ENCODE measurements at regions of chr6 and their contacts with region 1.

Region 1: GRCh38 chr6:35202066-35202546 is 11.7 kb upstream of the SCUBE3 start:
- DNase-seq: no peak
- ATAC-seq: peak; percentile 65
- H3K4me3 Mint-ChIP-seq: no peak overlapping the region
- H3K27ac Mint-ChIP-seq: no peak overlapping the region
- H3K4me1 Mint-ChIP-seq: peaks cover 4% of the 10 kb centered on the region
- H3K27me3 Mint-ChIP-seq: peaks cover 39% of the 10 kb centered on the region
- CTCF ChIP-seq: no peak

Region 2: GRCh38 chr6:35146453-35146852 is 55.7 kb before region 1 on chr6:
- CTCF ChIA-PET with region 1: interaction called, 56 read pairs
- POLR2A ChIA-PET with region 1: no interaction called
- DNase-seq: peak; percentile 56
- ATAC-seq: peak; percentile 15; the same call in 1 of the 2 replicates
- H3K4me3 Mint-ChIP-seq: no peak overlapping the region
- H3K27ac Mint-ChIP-seq: no peak overlapping the region
- H3K4me1 Mint-ChIP-seq: peaks cover 30% of the 10 kb centered on the region
- H3K27me3 Mint-ChIP-seq: peaks cover 60% of the 10 kb centered on the region
- CTCF ChIP-seq: no peak

Region 3: DNA sequence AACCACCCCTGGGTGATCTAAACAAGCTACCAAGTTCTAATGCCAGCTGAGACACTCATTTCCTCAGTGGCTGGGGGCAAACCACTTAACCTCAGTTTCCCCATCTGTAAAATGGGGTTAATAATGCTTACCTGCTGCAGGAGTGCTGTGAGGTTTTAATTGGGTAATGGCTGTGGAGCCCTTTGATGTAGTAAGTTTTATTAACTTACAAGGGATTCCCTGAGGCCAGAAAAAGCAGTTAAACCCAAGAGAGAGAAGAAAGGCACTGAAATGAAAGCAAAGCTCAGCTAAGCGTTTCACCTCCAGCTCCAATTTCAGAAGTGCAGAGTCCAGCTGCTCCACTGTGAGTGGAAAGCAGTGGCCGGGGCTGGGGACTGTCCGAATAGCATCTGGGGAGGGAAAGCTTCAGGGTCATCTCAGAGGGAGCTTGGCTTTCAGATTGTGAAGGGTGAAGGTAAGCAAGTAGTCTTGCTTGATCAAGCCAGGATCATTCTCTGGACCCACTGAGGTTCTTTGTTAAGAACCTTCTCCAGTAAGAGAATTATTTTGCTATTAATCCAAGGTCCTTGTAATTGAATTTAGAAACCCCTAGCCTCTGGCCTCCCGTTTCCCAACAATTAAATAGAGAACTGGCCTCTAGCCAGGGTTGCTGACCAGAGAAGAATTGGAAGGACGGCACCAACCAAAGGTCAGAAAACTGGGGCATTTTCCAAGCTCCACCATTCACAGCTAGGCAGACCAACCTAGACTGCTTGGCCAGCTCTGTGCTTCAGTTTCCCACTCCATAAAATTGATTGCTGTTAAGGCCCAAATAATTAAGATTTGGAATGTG is 40.1 kb before region 1 on chr6:
- CTCF ChIA-PET with region 1: interaction called, 14 read pairs
- POLR2A ChIA-PET with region 1: no interaction called
- DNase-seq: no peak
- ATAC-seq: no peak
- H3K4me3 Mint-ChIP-seq: no peak overlapping the region
- H3K27ac Mint-ChIP-seq: no peak overlapping the region
- H3K4me1 Mint-ChIP-seq: peaks cover 18% of the 10 kb centered on the region
- H3K27me3 Mint-ChIP-seq: peaks cover 17% of the 10 kb centered on the region
- CTCF ChIP-seq: no peak

Region 4: DNA sequence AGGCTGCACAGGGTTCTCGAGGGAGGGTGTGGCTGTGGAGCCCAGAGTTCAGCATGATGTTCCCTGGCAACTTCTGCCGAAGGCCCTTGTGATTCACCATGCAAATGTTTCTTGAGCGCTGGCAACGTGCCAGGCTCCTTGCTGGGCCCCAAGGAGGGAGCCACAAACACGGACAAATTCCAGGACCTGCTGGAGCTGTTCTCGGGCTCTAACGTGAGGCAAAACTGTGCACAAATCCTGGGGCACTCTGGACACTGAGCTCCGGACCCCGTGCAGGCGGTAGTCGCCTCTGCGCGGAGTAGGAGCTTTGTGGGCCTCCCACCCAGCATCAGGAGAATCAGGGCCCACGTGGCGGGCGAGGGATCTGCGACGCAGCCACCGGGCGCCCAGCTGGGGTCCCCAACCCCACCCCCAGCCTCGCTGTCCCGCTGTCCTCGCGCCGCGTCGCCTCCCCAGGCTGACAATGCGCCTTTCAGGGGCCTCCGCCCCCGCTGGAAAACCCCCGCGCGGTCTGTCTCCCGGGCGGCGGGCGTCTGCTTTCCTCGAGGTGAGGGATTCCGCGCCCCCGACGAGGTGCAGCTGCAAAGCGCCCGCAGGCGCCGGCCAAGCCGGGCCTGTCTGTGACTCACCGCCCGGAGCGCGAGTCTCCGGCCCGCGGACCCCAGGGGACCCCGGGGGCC is 20.0 kb before region 1 on chr6:
- CTCF ChIA-PET with region 1: interaction called, 21 read pairs
- POLR2A ChIA-PET with region 1: no interaction called
- DNase-seq: peak; percentile 49
- ATAC-seq: peak; percentile 41
- H3K4me3 Mint-ChIP-seq: no peak overlapping the region
- H3K27ac Mint-ChIP-seq: no peak overlapping the region
- H3K4me1 Mint-ChIP-seq: peaks cover 7% of the 10 kb centered on the region; the same call in 1 of the 2 replicates
- H3K27me3 Mint-ChIP-seq: peaks cover 11% of the 10 kb centered on the region
- CTCF ChIP-seq: no peak

Region 5: GRCh38 chr6:35213824-35214756 is 12.0 kb after region 1 on chr6 and contains the start of gene SCUBE3:
- CTCF ChIA-PET with region 1: interaction called, 32 read pairs
- POLR2A ChIA-PET with region 1: no interaction called
- DNase-seq: peak; percentile 70
- ATAC-seq: peak; percentile 74
- H3K4me3 Mint-ChIP-seq: peak within 1 kb of the TSS; percentile 80
- H3K27ac Mint-ChIP-seq: no peak within 1 kb of the TSS
- H3K4me1 Mint-ChIP-seq: peaks cover 43% of the 10 kb centered on the region
- H3K27me3 Mint-ChIP-seq: peaks cover 82% of the 10 kb centered on the region
- CTCF ChIP-seq: no peak
- total RNA-seq, gene SCUBE3: 1.6 to 2.1 TPM (median 1.8 TPM) in 3 replicates

Measured in WTC11 (cell line).